Common myeloid progenitor, CD34-positive (primary cell): ENCODE measurements at regions of chr12 and their contacts with region 1.

Region 1: GRCh38 chr12:15220994-15221885 is at the start of gene RERG:
- DNase-seq: peak; percentile 82 to 89 (median 86)
- H3K4me3 ChIP-seq: peak within 1 kb of the TSS in 6 of 7 experiments; percentile 24 to 72 (median 46)
- H3K27ac ChIP-seq: no peak within 1 kb of the TSS
- H3K4me1 ChIP-seq: peaks cover 6 to 11% (median 10%) of the 10 kb centered on the region in 4 experiments
- H3K27me3 ChIP-seq: peaks cover 0 to 36% (median 23%) of the 10 kb centered on the region in 5 experiments

Region 2: DNA sequence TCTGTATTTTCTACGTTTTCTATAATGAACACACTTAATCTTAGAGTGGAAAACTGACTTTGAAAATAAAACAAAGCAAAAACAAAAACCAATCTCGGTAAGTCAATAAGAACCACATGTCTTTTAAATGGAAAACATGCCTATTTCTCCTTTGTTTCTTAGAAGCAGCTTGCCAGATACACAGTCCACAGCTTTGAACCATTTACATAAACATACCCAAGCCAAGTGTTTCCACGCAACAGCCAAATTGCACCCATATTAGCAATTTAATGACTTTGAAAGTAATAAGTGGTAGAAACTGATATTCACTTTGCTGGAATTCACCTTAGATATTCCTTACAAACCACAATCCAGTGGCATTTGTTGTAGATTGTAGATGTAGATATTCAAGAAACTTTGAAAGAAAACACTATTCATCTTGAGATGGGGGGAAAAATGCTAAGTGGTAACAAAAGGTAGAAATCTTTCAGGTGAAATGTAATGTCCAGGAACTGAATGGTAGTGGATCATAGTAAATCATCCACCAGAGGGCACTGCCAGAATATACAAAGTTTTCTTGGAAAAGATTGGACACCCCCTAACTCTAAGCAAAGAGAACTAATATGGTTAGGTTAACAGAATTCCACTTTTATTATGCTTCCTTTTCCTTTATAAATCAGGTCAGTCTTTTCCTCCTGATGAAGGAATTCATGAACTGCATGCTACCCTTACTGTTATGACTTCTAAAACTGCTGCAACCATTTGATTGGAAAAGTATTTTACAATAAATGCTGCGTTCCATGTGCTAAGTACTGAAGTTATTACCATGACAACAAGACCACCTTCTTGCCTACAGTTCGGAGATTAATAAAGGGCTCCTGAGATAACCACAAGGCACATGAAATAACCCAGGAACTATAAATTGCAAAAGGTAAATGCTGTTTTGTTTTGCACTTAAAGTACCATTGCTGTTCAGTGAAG is 69.8 kb before region 1 on chr12:
- CTCF ChIA-PET with region 1: interaction called, 11 read pairs
- POLR2A ChIA-PET with region 1: no interaction called
- DNase-seq: peak; percentile 9 to 38 (median 28)
- H3K4me3 ChIP-seq: no peak overlapping the region
- H3K27ac ChIP-seq: no peak overlapping the region
- H3K4me1 ChIP-seq: no peaks in the 10 kb centered on the region
- H3K27me3 ChIP-seq: peaks cover 0 to 19% (median 0%) of the 10 kb centered on the region in 5 experiments

Region 3: DNA sequence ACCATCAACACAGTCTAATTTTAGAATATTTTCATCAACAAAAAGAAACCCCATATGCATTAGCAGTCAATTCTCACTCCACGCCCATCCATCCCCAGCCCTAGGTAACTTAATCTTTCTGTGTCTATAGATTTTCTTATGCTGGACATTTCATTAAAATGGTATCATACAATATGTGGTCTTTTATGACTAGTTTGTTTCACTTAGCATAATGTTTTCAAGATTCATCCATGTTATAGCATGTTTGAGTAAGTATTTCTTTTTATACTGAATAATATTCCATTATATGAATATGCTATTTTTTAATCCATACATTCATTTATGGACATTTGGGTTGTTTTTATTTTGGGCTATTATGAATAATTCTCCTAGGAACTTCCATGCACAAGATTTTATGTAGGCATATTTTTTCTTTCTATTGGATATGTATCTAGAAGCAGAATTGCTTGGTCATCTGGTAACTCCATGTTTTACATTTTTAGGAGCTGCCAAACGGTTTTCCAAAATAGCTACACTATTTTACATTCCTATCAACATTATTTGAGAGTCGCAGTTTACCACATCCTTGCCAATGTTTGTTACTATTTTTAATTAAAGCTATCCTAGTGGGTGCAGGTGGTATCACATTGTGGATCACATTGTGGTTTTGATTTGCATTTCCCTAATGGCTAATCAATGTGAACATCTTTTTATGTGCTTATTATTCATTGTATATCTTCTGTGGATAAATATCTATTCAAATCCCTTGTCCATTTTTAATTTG is 49.0 kb before region 1 on chr12:
- CTCF ChIA-PET with region 1: interaction called, 13 read pairs
- POLR2A ChIA-PET with region 1: no interaction called
- DNase-seq: no peak
- H3K4me3 ChIP-seq: no peak overlapping the region
- H3K27ac ChIP-seq: no peak overlapping the region
- H3K4me1 ChIP-seq: no peaks in the 10 kb centered on the region
- H3K27me3 ChIP-seq: peaks cover 0 to 13% (median 2%) of the 10 kb centered on the region in 5 experiments

Region 4: GRCh38 chr12:15196678-15197505 is 24.3 kb before region 1 on chr12:
- CTCF ChIA-PET with region 1: interaction called, 15 read pairs
- POLR2A ChIA-PET with region 1: no interaction called
- DNase-seq: no peak
- H3K4me3 ChIP-seq: no peak overlapping the region
- H3K27ac ChIP-seq: no peak overlapping the region
- H3K4me1 ChIP-seq: peaks cover 0 to 6% (median 3%) of the 10 kb centered on the region in 4 experiments
- H3K27me3 ChIP-seq: peaks cover 0 to 3% (median 0%) of the 10 kb centered on the region in 5 experiments

Region 5: GRCh38 chr12:15234508-15234907 is 13.3 kb after region 1 on chr12:
- CTCF ChIA-PET with region 1: interaction called, 13 read pairs
- POLR2A ChIA-PET with region 1: interaction called, 3 read pairs
- DNase-seq: no peak
- H3K4me3 ChIP-seq: no peak overlapping the region
- H3K27ac ChIP-seq: no peak overlapping the region
- H3K4me1 ChIP-seq: no peaks in the 10 kb centered on the region
- H3K27me3 ChIP-seq: peaks cover 0 to 46% (median 17%) of the 10 kb centered on the region in 5 experiments

Region 6: DNA sequence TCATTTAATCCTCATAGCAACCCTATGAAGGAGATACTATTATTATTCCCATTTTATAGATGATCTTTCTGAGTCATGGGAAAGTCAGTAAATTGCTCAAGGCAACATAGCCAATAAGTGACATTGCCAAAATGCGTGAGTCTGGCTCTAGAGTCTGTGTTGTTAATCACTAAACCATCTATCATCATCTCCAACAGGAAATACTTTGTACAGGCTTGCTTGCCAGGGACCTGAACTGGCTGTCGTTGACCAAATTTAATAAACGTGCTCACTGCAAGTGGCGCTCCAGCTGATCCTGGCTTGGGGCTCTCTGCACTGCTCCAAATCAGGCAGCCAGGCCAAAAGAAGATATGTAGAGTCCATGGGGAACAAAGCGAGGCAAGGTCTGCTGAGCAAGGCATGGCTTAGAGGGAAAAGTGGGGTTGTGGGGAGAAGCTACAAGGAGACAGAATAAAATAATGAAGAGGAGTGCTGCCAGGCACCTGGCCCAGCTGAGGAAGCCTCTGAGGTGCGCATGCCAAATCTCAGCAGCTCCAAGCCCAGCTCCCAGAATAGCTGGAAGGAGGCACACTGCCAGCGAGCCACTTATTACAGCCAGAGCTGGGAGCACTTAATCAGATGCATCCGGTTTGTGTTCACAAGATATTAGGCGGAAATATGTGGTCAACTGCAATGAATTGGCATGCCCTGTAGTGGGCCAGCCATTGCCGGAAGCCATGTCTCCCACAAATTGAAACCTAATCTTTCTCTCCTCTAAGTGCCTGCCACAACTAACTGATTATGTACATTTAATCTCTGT is 57.8 kb after region 1 on chr12:
- CTCF ChIA-PET with region 1: no interaction called
- POLR2A ChIA-PET with region 1: no interaction called
- DNase-seq: peak; percentile 75 to 91 (median 85)
- H3K4me3 ChIP-seq: no peak overlapping the region
- H3K27ac ChIP-seq: no peak overlapping the region
- H3K4me1 ChIP-seq: peaks cover 0 to 16% (median 10%) of the 10 kb centered on the region in 4 experiments
- H3K27me3 ChIP-seq: peaks cover 0 to 52% (median 14%) of the 10 kb centered on the region in 5 experiments